ENCODE measurements at regions of chr20 and their contacts with region 1.

Region 1: DNA sequence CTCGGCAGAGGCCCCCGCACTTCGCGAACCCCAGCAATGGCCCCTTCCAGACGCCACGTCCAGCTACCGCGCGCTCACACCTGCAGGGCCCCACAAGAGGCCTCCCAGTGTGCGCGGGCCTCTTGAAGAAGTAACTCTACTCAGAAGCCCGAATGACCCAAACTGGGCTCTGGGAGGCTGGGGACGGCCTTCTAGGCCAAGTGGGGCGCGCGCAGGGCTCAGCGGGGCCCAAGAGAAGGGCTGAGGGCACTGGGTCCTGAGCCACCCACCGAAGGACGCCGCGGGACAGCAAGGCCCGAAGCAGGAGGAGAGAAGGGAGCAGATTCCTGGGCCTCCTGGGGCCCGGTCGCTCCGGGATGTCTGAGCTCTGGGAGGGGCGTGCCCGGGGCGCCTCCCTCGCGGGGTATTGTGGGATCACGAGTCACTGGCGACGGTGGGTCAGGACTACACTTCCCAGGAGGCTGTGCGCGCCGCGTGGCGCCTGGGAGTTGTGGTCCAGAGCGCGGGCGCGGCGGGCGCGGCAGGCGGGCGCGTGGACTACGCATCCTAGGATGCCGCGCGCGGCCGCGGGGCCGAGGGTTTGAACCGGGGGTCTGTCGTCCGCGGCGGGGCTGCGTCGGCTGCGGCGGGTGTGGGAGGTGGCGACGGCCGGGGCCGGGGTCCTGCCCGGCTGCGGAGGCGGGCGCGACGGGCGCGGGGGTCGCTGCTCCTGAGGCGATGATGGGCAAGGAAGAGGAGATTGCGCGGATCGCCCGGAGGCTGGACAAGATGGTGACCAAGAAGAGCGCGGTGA is at the start of gene TCEA2:
- DNase-seq: peak; percentile 89 to 94 (median 93)
- H3K4me3 ChIP-seq: peak within 1 kb of the TSS; percentile 58 to 83 (median 76)
- H3K27ac ChIP-seq: peak within 1 kb of the TSS; percentile 33 to 83
- H3K4me1 ChIP-seq: peaks cover 2 to 61% (median 56%) of the 10 kb centered on the region in 4 experiments
- H3K27me3 ChIP-seq: no peaks in the 10 kb centered on the region

Region 2: DNA sequence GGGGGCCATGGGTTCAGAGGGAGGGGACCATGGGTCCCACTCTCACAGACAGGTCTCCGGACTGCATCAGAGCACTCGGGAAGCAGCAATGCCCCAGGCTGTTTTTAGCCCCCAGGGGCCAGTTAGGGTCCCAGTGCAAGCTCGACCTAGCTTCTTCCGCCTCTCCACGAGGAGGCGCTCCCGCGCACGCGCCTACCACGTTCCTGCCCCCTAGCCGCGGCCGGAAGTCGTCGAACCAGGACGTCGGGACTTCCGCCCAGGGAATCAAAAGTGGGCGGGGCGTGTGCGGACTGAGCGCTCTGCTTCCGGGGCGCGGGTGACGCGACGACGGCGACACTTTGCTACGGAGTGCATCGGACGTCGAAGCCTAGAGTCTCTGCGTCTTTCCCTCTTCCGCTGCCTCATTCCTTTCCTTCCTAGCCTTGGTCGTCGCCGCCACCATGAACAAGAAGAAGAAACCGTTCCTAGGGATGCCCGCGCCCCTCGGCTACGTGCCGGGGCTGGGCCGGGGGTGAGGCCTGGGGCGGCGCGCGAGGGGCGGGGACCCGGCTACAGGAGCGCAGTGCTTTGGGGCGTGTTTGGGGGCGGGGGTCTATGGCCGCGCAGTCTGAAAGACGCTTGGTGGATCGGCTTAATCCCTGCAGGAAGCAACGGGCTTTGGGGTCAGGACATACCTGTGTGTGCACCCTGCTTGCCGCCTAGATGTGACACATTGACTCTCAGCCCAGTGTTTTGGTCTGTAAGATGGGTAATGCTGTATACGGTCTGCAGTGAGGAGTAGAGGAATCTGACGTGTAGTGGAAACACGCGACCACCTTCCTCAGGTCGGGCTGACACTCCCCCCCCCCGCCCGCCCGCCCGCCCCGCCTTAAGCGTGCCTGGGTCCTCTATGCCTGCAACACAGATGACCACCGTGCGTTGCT is 81.7 kb before region 1 on chr20 and contains the start of gene PRPF6:
- CTCF ChIA-PET with region 1: interaction called, 13 read pairs
- POLR2A ChIA-PET with region 1: no interaction called
- DNase-seq: peak; percentile 96 to 98 (median 98)
- H3K4me3 ChIP-seq: peak within 1 kb of the TSS; percentile 77 to 99 (median 89)
- H3K27ac ChIP-seq: peak within 1 kb of the TSS in 1 of 2 experiments; percentile 88
- H3K4me1 ChIP-seq: peaks cover 5 to 49% (median 43%) of the 10 kb centered on the region in 4 experiments
- H3K27me3 ChIP-seq: no peaks in the 10 kb centered on the region

Region 3: GRCh38 chr20:64044484-64045247 is 18.1 kb before region 1 on chr20:
- CTCF ChIA-PET with region 1: interaction called, 187 read pairs
- POLR2A ChIA-PET with region 1: interaction called, 6 read pairs
- DNase-seq: peak in 1 of 3 donors; percentile 7
- H3K4me3 ChIP-seq: no peak overlapping the region
- H3K27ac ChIP-seq: no peak overlapping the region
- H3K4me1 ChIP-seq: peaks cover 4 to 71% (median 56%) of the 10 kb centered on the region in 4 experiments
- H3K27me3 ChIP-seq: peaks cover 0 to 18% (median 0%) of the 10 kb centered on the region in 5 experiments